ENCODE measurements at regions of chr17 and their contacts with region 1.

Region 1: GRCh38 chr17:7454980-7455379 is 10.1 kb downstream of the CHRNB1 start:
- DNase-seq: no peak
- H3K4me3 Mint-ChIP-seq: peak overlapping the region; percentile 83
- H3K27ac Mint-ChIP-seq: peak overlapping the region; percentile 93
- H3K4me1 Mint-ChIP-seq: peaks cover 37% of the 10 kb centered on the region
- H3K27me3 Mint-ChIP-seq: no peaks in the 10 kb centered on the region

Region 2: GRCh38 chr17:7383742-7384488 is 71.1 kb before region 1 on chr17:
- CTCF ChIA-PET with region 1: no interaction called
- POLR2A ChIA-PET with region 1: no interaction called
- DNase-seq: peak; percentile 82
- H3K4me3 Mint-ChIP-seq: peak overlapping the region; percentile 73
- H3K27ac Mint-ChIP-seq: peak overlapping the region; percentile 83
- H3K4me1 Mint-ChIP-seq: peaks cover 24% of the 10 kb centered on the region
- H3K27me3 Mint-ChIP-seq: peaks cover 33% of the 10 kb centered on the region

Region 3: DNA sequence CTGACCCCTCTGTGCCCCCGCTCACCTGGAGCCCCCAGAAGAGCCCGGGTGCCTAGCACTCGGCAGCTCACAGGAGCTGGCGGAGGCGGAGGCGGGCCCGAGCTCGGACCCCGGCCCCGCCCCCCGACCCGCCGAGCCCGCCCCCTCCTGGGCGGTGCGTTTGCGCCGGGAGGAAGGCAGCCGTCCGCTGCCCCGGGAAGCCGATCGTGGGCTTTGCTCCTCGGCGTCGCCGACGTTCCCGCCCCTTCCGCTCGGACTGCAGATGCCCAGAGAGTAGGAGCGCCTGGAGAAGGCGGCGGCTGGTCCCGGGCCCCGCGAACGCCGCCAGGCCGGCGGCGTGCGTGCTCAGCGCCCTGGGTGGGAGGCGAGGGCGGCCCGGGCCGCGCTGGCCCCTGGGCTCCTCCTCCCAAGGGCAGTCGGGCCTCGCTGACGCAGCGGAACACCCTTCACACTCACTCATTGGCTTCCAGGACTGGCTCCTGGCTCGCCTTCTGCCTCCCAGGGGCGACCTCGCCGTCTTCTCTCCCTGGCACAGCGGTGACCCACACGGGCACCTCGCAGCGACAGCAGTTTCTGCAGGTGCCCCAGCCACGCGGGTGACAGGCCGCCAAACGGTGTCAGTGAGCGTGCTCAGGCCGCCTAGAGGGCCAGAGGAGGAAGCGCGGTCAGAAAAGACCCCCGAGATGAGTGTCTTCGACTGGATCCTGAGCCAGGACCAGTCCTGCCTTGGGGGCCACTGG is 60.4 kb before region 1 on chr17 and contains the start of gene PLSCR3:
- CTCF ChIA-PET with region 1: no interaction called
- POLR2A ChIA-PET with region 1: no interaction called
- DNase-seq: peak; percentile 80
- H3K4me3 Mint-ChIP-seq: peak within 1 kb of the TSS; percentile 97
- H3K27ac Mint-ChIP-seq: peak within 1 kb of the TSS; percentile 89
- H3K4me1 Mint-ChIP-seq: peaks cover 34% of the 10 kb centered on the region
- H3K27me3 Mint-ChIP-seq: no peaks in the 10 kb centered on the region
- total RNA-seq, gene PLSCR3: 151 to 161 TPM

Region 4: GRCh38 chr17:7444682-7445618 is 10.0 kb before region 1 on chr17 and contains the start of gene CHRNB1:
- CTCF ChIA-PET with region 1: interaction called, 15 read pairs
- POLR2A ChIA-PET with region 1: interaction called, 3 read pairs
- DNase-seq: no peak
- H3K4me3 Mint-ChIP-seq: peak within 1 kb of the TSS; percentile 72
- H3K27ac Mint-ChIP-seq: peak within 1 kb of the TSS; percentile 33
- H3K4me1 Mint-ChIP-seq: peaks cover 26% of the 10 kb centered on the region
- H3K27me3 Mint-ChIP-seq: peaks cover 55% of the 10 kb centered on the region
- total RNA-seq, gene CHRNB1: 18.8 to 19.2 TPM